PC-9 (cell line): ENCODE measurements at regions of chr3 and their contacts with region 1.

Region 1: DNA sequence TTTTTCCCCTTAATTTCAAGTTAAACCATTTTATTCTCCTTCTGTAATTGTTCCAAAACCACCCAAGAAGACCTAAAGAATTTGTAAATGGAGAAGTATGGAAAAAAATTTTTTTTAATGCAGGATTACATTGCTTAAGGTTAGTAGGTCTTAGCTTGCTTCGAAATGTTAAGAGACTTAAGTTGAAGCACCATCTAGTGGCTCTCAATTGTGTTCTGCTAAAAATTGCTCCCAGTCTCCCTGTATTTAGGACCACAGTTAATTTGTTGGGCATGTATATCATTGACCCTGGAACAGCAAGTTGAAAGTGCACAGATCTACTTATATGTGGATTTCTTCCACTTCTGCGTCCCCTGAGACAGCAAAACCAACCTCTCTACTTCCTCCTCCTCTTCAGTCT is 32.4 kb downstream of the CD200R1L start:
- DNase-seq: peak; percentile 15 to 68
- H3K4me3 ChIP-seq: no peak overlapping the region
- H3K27ac ChIP-seq: peak overlapping the region; percentile 39
- H3K4me1 ChIP-seq: peaks cover 33% of the 10 kb centered on the region
- H3K27me3 ChIP-seq: no peaks in the 10 kb centered on the region
- CTCF ChIP-seq: peak; percentile 73

Region 2: DNA sequence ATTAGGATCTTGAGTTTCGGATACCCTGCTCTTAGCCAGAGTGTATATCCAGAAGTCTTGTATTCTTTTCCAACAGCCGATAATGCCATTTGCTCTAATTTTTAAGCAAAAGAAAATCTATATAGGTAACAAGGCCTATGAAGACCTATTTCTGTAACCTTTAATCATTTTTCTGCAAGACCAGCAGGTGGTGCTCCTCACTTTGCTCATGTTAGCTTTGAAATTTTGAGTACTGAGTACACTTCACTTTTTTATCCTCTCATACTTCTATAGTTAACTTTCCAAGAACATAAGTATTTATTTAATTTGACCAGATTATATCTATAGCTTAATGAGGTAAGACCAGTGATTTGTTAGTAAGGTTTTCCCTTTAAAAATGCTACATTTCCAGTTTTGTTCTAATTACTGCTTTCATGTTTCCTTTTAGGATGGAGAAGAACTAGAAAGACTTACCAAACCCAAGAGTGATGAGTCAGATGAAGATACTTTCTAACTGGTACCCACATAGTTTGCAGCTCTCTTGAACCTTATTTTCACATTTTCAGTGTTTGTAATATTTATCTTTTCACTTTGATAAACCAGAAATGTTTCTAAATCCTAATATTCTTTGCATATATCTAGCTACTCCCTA is 231.9 kb before region 1 on chr3:
- CTCF ChIA-PET with region 1: no interaction called
- POLR2A ChIA-PET with region 1: no interaction called
- intact Hi-C with region 1: loop called (anchors 1 kb)
- DNase-seq: peak; percentile 47 to 55
- H3K4me3 ChIP-seq: no peak overlapping the region
- H3K27ac ChIP-seq: no peak overlapping the region
- H3K4me1 ChIP-seq: no peaks in the 10 kb centered on the region
- H3K27me3 ChIP-seq: no peaks in the 10 kb centered on the region
- CTCF ChIP-seq: peak; percentile 83

Region 3: DNA sequence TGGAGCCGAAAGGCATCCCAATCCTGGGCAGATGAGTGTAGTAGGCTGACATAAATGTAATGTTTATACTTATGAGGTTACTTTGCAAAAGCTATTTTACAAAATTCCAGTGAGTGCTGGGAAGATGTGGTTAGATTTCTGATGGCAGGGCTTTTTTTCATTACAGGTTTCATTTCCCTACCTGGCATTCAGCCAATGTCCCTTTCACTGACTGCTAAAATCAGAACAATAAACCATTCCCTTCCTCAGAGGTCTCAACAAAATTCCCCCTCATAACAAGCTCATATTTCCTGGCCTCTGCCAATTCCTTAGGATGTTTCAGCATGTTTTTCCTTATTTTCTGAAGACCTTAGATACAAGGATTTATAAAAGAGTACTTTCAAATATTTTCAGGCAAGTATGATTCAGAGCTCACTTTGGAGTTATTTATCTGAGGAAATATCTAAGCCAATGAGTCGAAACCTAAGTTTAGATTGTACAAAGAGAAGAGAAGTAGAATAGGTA is 132.4 kb before region 1 on chr3:
- CTCF ChIA-PET with region 1: no interaction called
- POLR2A ChIA-PET with region 1: interaction called, 4 read pairs
- intact Hi-C with region 1: loop called (anchors 1 kb)
- DNase-seq: peak; percentile 31 to 45
- H3K4me3 ChIP-seq: no peak overlapping the region
- H3K27ac ChIP-seq: peak overlapping the region; percentile 52
- H3K4me1 ChIP-seq: peaks cover 27% of the 10 kb centered on the region
- H3K27me3 ChIP-seq: no peaks in the 10 kb centered on the region
- CTCF ChIP-seq: no peak

Region 4: DNA sequence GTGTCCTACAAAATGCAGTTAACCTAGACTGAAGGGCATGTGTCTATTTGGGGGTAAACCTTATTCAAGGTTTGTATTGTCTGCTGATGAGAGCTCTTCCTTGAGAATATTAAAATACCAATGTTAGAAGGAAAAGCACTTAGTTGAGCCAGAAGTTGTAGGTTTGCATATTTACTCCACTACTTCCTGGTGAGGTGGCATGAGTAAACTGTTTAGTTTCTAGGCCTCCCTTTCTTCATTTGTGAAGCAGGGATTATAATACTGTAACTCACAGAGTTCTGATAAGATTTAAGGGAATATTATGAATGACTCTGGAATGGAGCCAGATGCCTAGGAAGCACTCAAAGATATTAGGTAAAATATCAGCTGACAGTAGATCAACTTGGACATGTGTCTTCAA is 14.3 kb before region 1 on chr3:
- CTCF ChIA-PET with region 1: interaction called, 11 read pairs
- POLR2A ChIA-PET with region 1: interaction called, 7 read pairs
- intact Hi-C with region 1: no loop called
- DNase-seq: peak; percentile 8 to 80
- H3K4me3 ChIP-seq: no peak overlapping the region
- H3K27ac ChIP-seq: peak overlapping the region; percentile 88
- H3K4me1 ChIP-seq: peaks cover 46% of the 10 kb centered on the region
- H3K27me3 ChIP-seq: no peaks in the 10 kb centered on the region
- CTCF ChIP-seq: no peak